B cell (primary cell): ENCODE measurements at regions of chr4 and their contacts with region 1.

Region 1: GRCh38 chr4:128287871-128288688 is 467 bp upstream of the PGRMC2 start:
- DNase-seq: peak; percentile 100
- ATAC-seq: peak; percentile 87
- H3K4me3 ChIP-seq: peak overlapping the region; percentile 51 to 90 (median 88)
- H3K4me3 Mint-ChIP-seq: peak overlapping the region; percentile 87
- H3K27ac ChIP-seq: peak overlapping the region; percentile 88 to 92
- H3K27ac Mint-ChIP-seq: peak overlapping the region; percentile 90
- H3K4me1 ChIP-seq: peaks cover 23 to 27% of the 10 kb centered on the region in 2 donors
- H3K4me1 Mint-ChIP-seq: peaks cover 29% of the 10 kb centered on the region
- H3K27me3 ChIP-seq: no peaks in the 10 kb centered on the region
- H3K27me3 Mint-ChIP-seq: no peaks in the 10 kb centered on the region
- CTCF ChIP-seq: no peak

Region 2: DNA sequence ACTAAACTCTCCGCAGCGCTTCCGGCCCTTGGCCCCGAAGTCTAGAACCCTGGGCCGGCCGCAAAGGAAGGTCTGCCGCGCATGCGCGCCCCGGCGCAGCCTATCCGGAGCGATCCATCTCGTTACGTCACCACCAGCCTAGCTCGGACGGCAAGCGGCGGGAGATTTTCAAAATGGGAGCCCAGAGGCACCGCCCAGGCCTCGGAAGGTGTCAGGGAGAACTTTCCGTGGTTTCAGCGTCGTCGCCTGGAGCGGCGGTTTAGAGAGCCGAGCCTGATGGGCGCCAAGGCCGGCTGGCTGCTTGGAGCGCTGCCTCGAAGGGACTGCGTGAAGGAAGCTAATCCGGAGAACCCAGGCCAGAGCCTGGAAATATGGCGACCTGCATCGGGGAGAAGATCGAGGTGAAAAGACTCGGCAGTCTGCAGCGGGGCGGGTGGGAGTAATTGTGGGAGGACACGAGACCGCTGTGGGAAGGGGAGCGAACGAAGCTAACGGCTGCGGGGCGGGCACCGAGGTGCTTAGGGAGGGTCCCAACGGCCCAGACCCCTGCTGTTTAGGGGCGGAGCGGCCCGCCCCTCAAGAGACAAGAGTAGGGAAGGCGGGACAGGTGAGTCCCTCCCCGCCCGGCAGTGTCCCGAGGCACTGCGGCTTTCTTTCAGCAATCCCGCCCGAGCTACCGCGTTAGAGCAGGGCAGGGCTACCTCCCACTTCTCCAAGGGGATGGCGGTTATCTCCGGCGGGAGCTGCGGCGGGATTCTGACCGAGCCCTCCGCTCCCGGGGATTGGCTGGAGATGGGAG is 407.1 kb before region 1 on chr4 and contains the start of gene PLK4:
- CTCF ChIA-PET with region 1: no interaction called
- POLR2A ChIA-PET with region 1: no interaction called
- intact Hi-C with region 1: loop called (anchors 1 kb)
- DNase-seq: peak; percentile 96
- ATAC-seq: peak; percentile 95
- H3K4me3 ChIP-seq: peak within 1 kb of the TSS; percentile 72 to 97 (median 84)
- H3K4me3 Mint-ChIP-seq: peak within 1 kb of the TSS; percentile 98
- H3K27ac ChIP-seq: peak within 1 kb of the TSS; percentile 83 to 88
- H3K27ac Mint-ChIP-seq: peak within 1 kb of the TSS; percentile 97
- H3K4me1 ChIP-seq: peaks cover 7 to 10% of the 10 kb centered on the region in 2 donors
- H3K4me1 Mint-ChIP-seq: peaks cover 17% of the 10 kb centered on the region
- H3K27me3 ChIP-seq: no peaks in the 10 kb centered on the region
- H3K27me3 Mint-ChIP-seq: no peaks in the 10 kb centered on the region
- CTCF ChIP-seq: no peak
- total RNA-seq, gene PLK4: 2.8 and 4.3 TPM in 2 replicates

Region 3: DNA sequence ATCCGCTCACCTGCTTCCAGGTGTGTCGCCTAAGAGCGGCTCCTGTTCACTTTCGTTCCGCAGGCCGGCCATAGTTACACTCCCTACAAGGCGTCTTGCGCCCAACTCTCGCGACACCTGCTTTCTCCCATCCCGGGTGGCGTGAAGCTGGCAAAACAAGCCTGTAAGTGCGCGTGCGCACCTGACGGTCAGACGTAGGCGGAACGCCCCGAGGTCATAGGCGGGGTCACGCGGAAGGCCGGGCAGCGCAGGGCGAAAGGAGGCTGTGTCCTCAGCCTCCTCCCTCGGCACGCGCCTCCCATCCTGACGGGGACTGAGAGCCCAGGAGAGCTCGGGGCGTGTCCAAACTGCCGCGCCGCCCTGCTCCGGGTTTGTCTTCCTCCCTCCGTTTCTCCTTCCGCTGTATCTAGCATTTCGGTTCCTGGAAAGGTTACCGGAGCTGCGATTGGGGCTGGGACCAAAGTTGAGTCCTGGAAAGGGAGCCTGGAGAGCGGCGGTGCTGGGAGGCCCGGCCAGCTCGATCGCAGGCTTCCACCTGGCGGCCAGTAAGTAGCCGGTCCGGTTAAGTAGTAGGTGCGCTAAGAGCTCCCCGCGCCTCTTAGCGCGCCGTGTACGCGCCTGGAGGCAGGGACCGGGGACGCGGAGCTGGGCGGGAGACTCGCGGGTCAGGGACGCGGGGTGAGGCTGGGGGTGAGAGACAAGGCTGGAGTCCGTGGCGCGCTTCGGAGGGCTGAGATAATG is 322.8 kb before region 1 on chr4 and contains the starts of genes ABHD18 and MFSD8:
- CTCF ChIA-PET with region 1: no interaction called
- POLR2A ChIA-PET with region 1: interaction called, 4 read pairs
- intact Hi-C with region 1: loop called (anchors 1 kb)
- DNase-seq: peak; percentile 100
- ATAC-seq: peak; percentile 97
- H3K4me3 ChIP-seq: peak within 1 kb of the TSS; percentile 76 to 100 (median 85)
- H3K4me3 Mint-ChIP-seq: peak within 1 kb of the TSS; percentile 98
- H3K27ac ChIP-seq: peak within 1 kb of the TSS; percentile 86 to 96
- H3K27ac Mint-ChIP-seq: peak within 1 kb of the TSS; percentile 97
- H3K4me1 ChIP-seq: peaks cover 5 to 18% of the 10 kb centered on the region in 2 donors
- H3K4me1 Mint-ChIP-seq: peaks cover 34% of the 10 kb centered on the region
- H3K27me3 ChIP-seq: no peaks in the 10 kb centered on the region
- H3K27me3 Mint-ChIP-seq: no peaks in the 10 kb centered on the region
- CTCF ChIP-seq: peak; percentile 33
- total RNA-seq, gene ABHD18: 17.5 and 18.3 TPM in 2 replicates
- total RNA-seq, gene MFSD8: 52.2 and 53.1 TPM in 2 replicates

Region 4: GRCh38 chr4:128060699-128061565 is 227.1 kb before region 1 on chr4 and contains the start of gene LARP1B:
- CTCF ChIA-PET with region 1: no interaction called
- POLR2A ChIA-PET with region 1: interaction called, 14 read pairs
- intact Hi-C with region 1: loop called (anchors 1 kb)
- DNase-seq: peak; percentile 95
- ATAC-seq: peak; percentile 84
- H3K4me3 ChIP-seq: peak within 1 kb of the TSS; percentile 41 to 72 (median 66)
- H3K4me3 Mint-ChIP-seq: peak within 1 kb of the TSS; percentile 90
- H3K27ac ChIP-seq: peak within 1 kb of the TSS; percentile 84 to 96
- H3K27ac Mint-ChIP-seq: peak within 1 kb of the TSS; percentile 92
- H3K4me1 ChIP-seq: peaks cover 3 to 12% of the 10 kb centered on the region in 2 donors
- H3K4me1 Mint-ChIP-seq: peaks cover 11% of the 10 kb centered on the region
- H3K27me3 ChIP-seq: no peaks in the 10 kb centered on the region
- H3K27me3 Mint-ChIP-seq: no peaks in the 10 kb centered on the region
- CTCF ChIP-seq: no peak
- total RNA-seq, gene LARP1B: 13.6 and 14.6 TPM in 2 replicates

Region 5: GRCh38 chr4:128191115-128191781 is 96.8 kb before region 1 on chr4:
- CTCF ChIA-PET with region 1: no interaction called
- POLR2A ChIA-PET with region 1: no interaction called
- intact Hi-C with region 1: loop called (anchors 2 kb)
- DNase-seq: peak; percentile 81
- ATAC-seq: peak; percentile 97
- H3K4me3 ChIP-seq: no peak overlapping the region
- H3K4me3 Mint-ChIP-seq: no peak overlapping the region
- H3K27ac ChIP-seq: no peak overlapping the region
- H3K27ac Mint-ChIP-seq: no peak overlapping the region
- H3K4me1 ChIP-seq: no peaks in the 10 kb centered on the region
- H3K4me1 Mint-ChIP-seq: no peaks in the 10 kb centered on the region
- H3K27me3 ChIP-seq: no peaks in the 10 kb centered on the region
- H3K27me3 Mint-ChIP-seq: no peaks in the 10 kb centered on the region
- CTCF ChIP-seq: peak; percentile 94

Region 6: DNA sequence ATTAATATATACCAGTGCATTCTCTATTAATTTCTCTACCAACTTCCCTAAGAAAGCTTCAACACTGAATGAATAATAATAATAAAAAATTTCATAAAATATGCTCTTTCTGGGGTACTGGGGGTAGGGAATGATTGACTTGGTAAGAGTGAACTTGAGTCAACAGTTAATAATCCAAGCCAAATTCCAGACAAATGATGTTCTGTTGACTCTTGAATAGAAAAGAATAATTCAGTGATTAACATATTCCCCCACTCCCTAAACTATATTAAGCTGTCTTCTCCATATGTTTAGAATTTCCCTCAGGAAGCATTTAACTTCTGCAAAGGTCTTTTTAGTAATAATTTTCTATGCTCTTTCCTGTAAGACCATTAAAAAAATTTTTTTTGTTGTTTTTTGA is 12.7 kb before region 1 on chr4:
- CTCF ChIA-PET with region 1: no interaction called
- POLR2A ChIA-PET with region 1: no interaction called
- intact Hi-C with region 1: no loop called
- DNase-seq: no peak
- ATAC-seq: no peak
- H3K4me3 ChIP-seq: no peak overlapping the region
- H3K4me3 Mint-ChIP-seq: no peak overlapping the region
- H3K27ac ChIP-seq: no peak overlapping the region
- H3K27ac Mint-ChIP-seq: no peak overlapping the region
- H3K4me1 ChIP-seq: no peaks in the 10 kb centered on the region
- H3K4me1 Mint-ChIP-seq: no peaks in the 10 kb centered on the region
- H3K27me3 ChIP-seq: no peaks in the 10 kb centered on the region
- H3K27me3 Mint-ChIP-seq: no peaks in the 10 kb centered on the region
- CTCF ChIP-seq: no peak